PC-3 (cell line): ENCODE measurements at regions of chr2 and their contacts with region 1.

Region 1: GRCh38 chr2:110770959-110771431 is 38.6 kb downstream of the ACOXL start:
- DNase-seq: peak; percentile 83
- ATAC-seq: peak; percentile 95
- H3K4me3 ChIP-seq: peak overlapping the region; percentile 51
- H3K27ac ChIP-seq: no peak overlapping the region
- H3K4me1 ChIP-seq: peaks cover 21% of the 10 kb centered on the region
- H3K27me3 ChIP-seq: no peaks in the 10 kb centered on the region
- CTCF ChIP-seq: no peak

Region 2: GRCh38 chr2:110173523-110173922 is 597.5 kb before region 1 on chr2:
- CTCF ChIA-PET with region 1: no interaction called
- POLR2A ChIA-PET with region 1: interaction called, 12 read pairs
- intact Hi-C with region 1: no loop called
- DNase-seq: peak; percentile 84
- ATAC-seq: peak; percentile 100
- H3K4me3 ChIP-seq: no peak overlapping the region
- H3K27ac ChIP-seq: no peak overlapping the region
- H3K4me1 ChIP-seq: peaks cover 12% of the 10 kb centered on the region
- H3K27me3 ChIP-seq: no peaks in the 10 kb centered on the region
- CTCF ChIP-seq: no peak

Region 3: GRCh38 chr2:110211938-110212858 is 558.8 kb before region 1 on chr2 and contains the start of gene MTLN:
- CTCF ChIA-PET with region 1: no interaction called
- POLR2A ChIA-PET with region 1: no interaction called
- intact Hi-C with region 1: no loop called
- DNase-seq: peak; percentile 73
- ATAC-seq: peak; percentile 88
- H3K4me3 ChIP-seq: peak within 1 kb of the TSS; percentile 80
- H3K27ac ChIP-seq: peak within 1 kb of the TSS; percentile 54
- H3K4me1 ChIP-seq: no peaks in the 10 kb centered on the region
- H3K27me3 ChIP-seq: no peaks in the 10 kb centered on the region
- CTCF ChIP-seq: no peak
- total RNA-seq, gene MTLN: 166 and 181 TPM in 2 replicates